Lower leg skin (tissue), 4 donors: ENCODE measurements at regions of chr17 and their contacts with region 1.

Region 1: GRCh38 chr17:74864866-74865395 is 5.2 kb upstream of the GRIN2C start:
- DNase-seq: peak; percentile 54 to 96
- H3K4me3 ChIP-seq: no peak overlapping the region
- CTCF ChIP-seq: peak in 1 of 3 donors; percentile 87
- POLR2A ChIP-seq: no peak

Region 2: DNA sequence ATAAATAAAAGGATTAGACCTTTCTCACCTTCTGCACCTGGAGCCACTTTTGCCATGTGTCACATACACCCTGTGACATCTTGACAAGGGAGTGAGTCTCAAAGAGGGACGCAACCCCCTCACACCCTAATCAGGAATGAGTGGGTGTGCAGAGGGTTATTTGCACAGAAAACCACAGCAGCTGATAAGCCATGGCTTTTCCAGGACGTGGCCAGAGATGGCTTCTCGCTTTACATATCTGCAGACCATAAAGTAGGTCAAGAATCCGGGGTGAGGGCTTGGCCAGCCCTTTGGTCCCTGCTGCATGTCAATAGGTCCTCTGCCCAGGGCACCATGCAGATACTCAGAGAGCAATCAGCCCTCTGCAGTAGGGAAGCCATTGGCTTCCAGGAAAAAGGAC is 149.8 kb before region 1 on chr17:
- intact Hi-C with region 1: no loop called
- DNase-seq: no peak
- H3K4me3 ChIP-seq: no peak overlapping the region
- CTCF ChIP-seq: no peak
- POLR2A ChIP-seq: no peak

Region 3: DNA sequence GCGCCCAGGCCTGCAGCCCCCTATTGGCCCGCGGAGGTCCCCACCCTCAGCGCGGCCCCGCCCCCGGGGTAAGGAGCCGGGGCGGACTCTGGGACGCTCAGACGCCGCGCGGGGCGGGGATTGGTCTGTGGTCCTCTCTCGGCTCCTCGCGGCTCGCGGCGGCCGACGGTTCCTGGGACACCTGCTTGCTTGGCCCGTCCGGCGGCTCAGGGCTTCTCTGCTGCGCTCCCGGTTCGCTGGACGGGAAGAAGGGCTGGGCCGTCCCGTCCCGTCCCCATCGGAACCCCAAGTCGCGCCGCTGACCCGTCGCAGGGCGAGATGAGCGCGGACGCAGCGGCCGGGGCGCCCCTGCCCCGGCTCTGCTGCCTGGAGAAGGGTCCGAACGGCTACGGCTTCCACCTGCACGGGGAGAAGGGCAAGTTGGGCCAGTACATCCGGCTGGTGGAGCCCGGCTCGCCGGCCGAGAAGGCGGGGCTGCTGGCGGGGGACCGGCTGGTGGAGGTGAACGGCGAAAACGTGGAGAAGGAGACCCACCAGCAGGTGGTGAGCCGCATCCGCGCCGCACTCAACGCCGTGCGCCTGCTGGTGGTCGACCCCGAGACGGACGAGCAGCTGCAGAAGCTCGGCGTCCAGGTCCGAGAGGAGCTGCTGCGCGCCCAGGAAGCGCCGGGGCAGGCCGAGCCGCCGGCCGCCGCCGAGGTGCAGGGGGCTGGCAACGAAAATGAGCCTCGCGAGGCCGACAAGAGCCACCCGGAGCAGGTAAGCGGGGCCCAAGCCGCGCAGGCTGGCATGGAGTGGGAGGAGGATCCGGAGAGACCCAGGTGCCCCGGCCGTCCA is 116.2 kb before region 1 on chr17 and contains the start of gene NHERF1:
- intact Hi-C with region 1: loop called (anchors 10 kb)
- DNase-seq: peak; percentile 88 to 98
- H3K4me3 ChIP-seq: peak within 1 kb of the TSS; percentile 98
- CTCF ChIP-seq: no peak
- POLR2A ChIP-seq: peak in 1 of 2 donors; percentile 71
- total RNA-seq, gene NHERF1: 47.6 to 67.7 (median 58.6) TPM

Region 4: GRCh38 chr17:74790161-74791054 is 74.5 kb before region 1 on chr17:
- intact Hi-C with region 1: loop called (anchors 5 kb)
- DNase-seq: no peak
- H3K4me3 ChIP-seq: no peak overlapping the region
- CTCF ChIP-seq: no peak
- POLR2A ChIP-seq: no peak